ENCODE measurements at regions of chr16 and their contacts with region 1.

Region 1: GRCh38 chr16:22018559-22018958 is 10.6 kb downstream of the MOSMO start:
- DNase-seq: no peak
- H3K4me3 ChIP-seq: no peak overlapping the region
- H3K27ac ChIP-seq: no peak overlapping the region
- H3K27me3 ChIP-seq: no peaks in the 10 kb centered on the region
- CTCF ChIP-seq: no peak

Region 2: DNA sequence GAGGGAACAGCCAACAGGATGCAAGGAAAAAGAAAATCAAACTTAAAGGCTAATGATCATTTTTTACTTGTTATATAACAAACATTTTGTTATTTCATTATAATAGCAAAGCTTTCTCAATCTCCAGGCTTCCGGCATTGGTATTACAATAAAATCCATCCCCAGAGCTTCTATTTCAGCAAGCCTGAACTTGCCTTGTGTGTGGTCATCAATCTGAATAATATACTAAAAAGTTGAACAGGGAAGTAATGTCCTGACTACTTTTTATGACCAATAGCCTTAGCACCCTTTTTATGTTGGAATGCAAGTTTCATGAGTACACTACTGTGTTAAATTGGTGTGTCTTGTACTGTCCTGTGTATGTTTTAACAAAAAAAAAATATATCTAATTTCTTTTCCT is 46.7 kb after region 1 on chr16:
- intact Hi-C with region 1: loop called in 1 of 2 experiments (anchors 5 kb)
- DNase-seq: no peak
- H3K4me3 ChIP-seq: no peak overlapping the region
- H3K27ac ChIP-seq: no peak overlapping the region
- H3K27me3 ChIP-seq: no peaks in the 10 kb centered on the region
- CTCF ChIP-seq: no peak

Region 3: GRCh38 chr16:22346483-22346882 is 327.9 kb after region 1 on chr16:
- intact Hi-C with region 1: no loop called
- DNase-seq: no peak
- H3K4me3 ChIP-seq: no peak overlapping the region
- H3K27ac ChIP-seq: peak overlapping the region in 12 of 59 donors; percentile 11 to 67 (median 36)
- H3K27me3 ChIP-seq: no peaks in the 10 kb centered on the region
- CTCF ChIP-seq: no peak